ENCODE measurements at regions of chr15 and their contacts with region 1.

Region 1: GRCh38 chr15:38671675-38672254 is 107.2 kb upstream of the RASGRP1 start:
- DNase-seq: peak; percentile 53
- H3K4me3 Mint-ChIP-seq: peak overlapping the region; percentile 28
- H3K27ac Mint-ChIP-seq: peak overlapping the region; percentile 95
- H3K4me1 Mint-ChIP-seq: peaks cover 79% of the 10 kb centered on the region
- H3K27me3 Mint-ChIP-seq: no peaks in the 10 kb centered on the region

Region 2: DNA sequence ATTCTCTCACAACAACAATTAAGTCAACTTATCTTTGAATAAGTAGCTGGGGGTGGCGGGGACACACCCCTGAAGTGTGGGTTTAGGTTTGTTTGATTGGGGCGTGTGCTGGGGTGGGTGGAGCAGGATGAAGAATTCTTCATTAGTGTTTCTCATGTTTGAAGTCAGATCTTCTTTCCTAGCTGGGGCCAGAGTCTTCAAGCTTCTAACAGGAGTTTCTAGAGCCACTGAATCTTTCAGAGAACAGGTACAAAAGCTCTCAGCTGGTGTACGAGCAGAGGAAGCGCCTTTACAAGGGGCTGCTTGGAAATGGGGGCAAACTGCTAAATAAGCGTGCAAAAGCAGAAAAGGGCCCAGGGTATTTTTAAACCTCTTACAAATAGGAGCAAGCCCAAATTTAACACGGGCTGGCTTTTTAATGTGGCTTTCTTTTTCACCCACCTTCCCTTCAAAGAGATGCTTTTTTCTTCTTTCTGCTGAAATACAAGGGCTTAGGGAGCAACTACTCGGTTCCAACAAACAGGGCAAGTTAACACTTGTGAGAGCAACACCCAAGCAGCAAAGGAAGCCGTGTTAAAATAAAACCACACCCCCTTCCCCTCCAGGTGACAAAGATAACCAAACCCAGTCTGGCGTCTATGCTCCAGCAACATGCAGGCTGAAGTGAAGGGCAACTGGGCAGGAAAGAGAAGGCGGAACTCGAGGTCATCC is 20.3 kb before region 1 on chr15:
- CTCF ChIA-PET with region 1: interaction called, 14 read pairs
- POLR2A ChIA-PET with region 1: interaction called, 15 read pairs
- DNase-seq: peak; percentile 81
- H3K4me3 Mint-ChIP-seq: peak overlapping the region; percentile 77
- H3K27ac Mint-ChIP-seq: peak overlapping the region; percentile 97
- H3K4me1 Mint-ChIP-seq: peaks cover 89% of the 10 kb centered on the region
- H3K27me3 Mint-ChIP-seq: no peaks in the 10 kb centered on the region

Region 3: DNA sequence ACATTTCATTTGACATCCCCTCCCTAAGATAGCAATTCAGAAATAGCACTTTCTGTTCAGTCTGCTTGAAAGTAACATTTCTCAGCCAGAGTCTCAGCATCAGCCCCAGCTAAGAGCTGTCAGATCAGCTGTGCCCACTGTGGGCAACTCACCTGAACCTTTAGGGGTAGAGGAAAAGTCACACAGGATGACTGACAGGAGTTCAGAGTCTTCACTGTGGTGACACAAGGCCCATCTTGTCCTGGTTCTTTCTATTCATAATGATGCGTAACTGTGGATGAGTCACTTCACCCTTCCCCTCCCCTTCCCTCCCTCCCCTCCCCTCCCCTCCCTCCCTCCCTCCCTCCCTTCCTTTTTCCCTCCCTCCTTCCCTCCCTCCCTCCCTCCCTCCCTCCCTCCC is 11.0 kb before region 1 on chr15:
- CTCF ChIA-PET with region 1: interaction called, 18 read pairs
- POLR2A ChIA-PET with region 1: interaction called, 4 read pairs
- DNase-seq: peak; percentile 28
- H3K4me3 Mint-ChIP-seq: peak overlapping the region; percentile 42
- H3K27ac Mint-ChIP-seq: peak overlapping the region; percentile 85
- H3K4me1 Mint-ChIP-seq: peaks cover 80% of the 10 kb centered on the region
- H3K27me3 Mint-ChIP-seq: no peaks in the 10 kb centered on the region

Region 4: GRCh38 chr15:38683382-38684242 is 11.8 kb after region 1 on chr15:
- CTCF ChIA-PET with region 1: interaction called, 142 read pairs
- POLR2A ChIA-PET with region 1: interaction called, 9 read pairs
- DNase-seq: peak; percentile 82
- H3K4me3 Mint-ChIP-seq: peak overlapping the region; percentile 55
- H3K27ac Mint-ChIP-seq: peak overlapping the region; percentile 95
- H3K4me1 Mint-ChIP-seq: peaks cover 81% of the 10 kb centered on the region
- H3K27me3 Mint-ChIP-seq: no peaks in the 10 kb centered on the region